ENCODE measurements at regions of chr2 and their contacts with region 1.

Region 1: DNA sequence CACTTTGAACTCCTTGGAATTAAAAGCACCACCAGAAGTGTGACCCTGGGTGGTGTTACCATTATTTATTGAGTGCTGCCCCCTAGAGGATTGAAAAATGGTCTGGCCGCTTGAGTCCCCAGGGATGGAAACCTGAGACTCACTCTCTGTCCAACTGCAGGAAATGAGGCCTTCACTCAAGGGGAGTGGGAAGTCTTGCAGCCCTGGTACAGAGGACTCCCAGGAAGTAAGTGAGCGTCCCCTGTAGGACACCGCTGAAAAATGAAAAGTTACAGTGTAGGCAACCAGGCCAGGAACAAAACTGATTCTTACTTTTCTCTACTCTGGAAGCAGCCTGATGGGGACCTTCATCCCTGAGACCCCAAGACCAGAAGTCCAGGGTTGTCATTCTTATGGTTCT is 2.2 kb upstream of the NRP2 start:
- DNase-seq: no peak
- H3K4me3 ChIP-seq: no peak overlapping the region
- H3K27ac ChIP-seq: no peak overlapping the region
- H3K4me1 ChIP-seq: peaks cover 26% of the 10 kb centered on the region
- H3K27me3 ChIP-seq: no peaks in the 10 kb centered on the region
- CTCF ChIP-seq: peak; percentile 35 to 45 (median 42)
- POLR2A ChIP-seq: no peak

Region 2: GRCh38 chr2:204325468-204325867 is 1354.6 kb before region 1 on chr2:
- intact Hi-C with region 1: loop called (anchors 10 kb)
- DNase-seq: no peak
- H3K4me3 ChIP-seq: no peak overlapping the region
- H3K27ac ChIP-seq: no peak overlapping the region
- H3K4me1 ChIP-seq: peaks cover 6% of the 10 kb centered on the region
- H3K27me3 ChIP-seq: no peaks in the 10 kb centered on the region
- CTCF ChIP-seq: peak; percentile 63 to 92 (median 76)
- POLR2A ChIP-seq: no peak

Region 3: DNA sequence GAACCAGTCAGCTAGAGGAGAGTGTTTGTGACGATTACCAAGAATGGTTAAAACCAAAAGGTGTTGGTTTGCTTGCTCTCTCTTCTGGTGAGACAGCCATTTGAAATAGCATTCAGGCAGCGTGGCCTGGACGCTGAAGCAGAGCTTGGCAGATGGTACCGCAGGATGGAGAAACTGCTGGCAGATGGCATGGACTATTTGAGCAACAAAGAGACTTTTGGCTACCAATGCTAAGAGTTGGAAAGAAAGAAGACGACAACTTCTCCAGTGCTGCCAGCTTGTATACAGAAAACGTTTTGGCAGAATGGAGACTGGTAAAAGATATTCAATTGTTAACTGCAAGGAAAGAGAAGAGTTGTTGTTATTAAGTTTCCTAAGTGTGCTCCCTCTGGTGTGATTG is 819.8 kb before region 1 on chr2:
- intact Hi-C with region 1: loop called (anchors 10 kb)
- DNase-seq: no peak
- H3K4me3 ChIP-seq: no peak overlapping the region
- H3K27ac ChIP-seq: no peak overlapping the region
- H3K4me1 ChIP-seq: no peaks in the 10 kb centered on the region
- H3K27me3 ChIP-seq: no peaks in the 10 kb centered on the region
- CTCF ChIP-seq: no peak
- POLR2A ChIP-seq: no peak

Region 4: DNA sequence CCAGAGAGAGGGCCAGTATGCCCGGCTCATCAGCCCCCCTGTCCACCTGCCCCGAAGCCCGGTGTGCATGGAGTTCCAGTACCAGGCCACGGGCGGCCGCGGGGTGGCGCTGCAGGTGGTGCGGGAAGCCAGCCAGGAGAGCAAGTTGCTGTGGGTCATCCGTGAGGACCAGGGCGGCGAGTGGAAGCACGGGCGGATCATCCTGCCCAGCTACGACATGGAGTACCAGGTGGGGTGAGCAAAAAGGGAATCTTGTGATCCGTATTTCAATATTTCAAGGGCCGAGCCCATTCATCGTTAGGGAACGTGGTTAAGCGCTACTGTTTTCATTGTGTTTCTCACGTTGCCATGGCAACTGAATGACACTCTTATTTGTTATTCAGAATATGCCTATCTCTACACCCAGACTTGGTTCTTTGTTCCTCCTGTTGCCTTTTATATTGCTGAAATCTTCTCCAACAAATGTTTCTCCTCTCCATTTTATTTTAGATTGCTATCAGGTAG is 83.7 kb after region 1 on chr2:
- intact Hi-C with region 1: loop called (anchors 5 kb)
- DNase-seq: no peak
- H3K4me3 ChIP-seq: no peak overlapping the region
- H3K27ac ChIP-seq: peak overlapping the region; percentile 24
- H3K4me1 ChIP-seq: peaks cover 10% of the 10 kb centered on the region
- H3K27me3 ChIP-seq: no peaks in the 10 kb centered on the region
- CTCF ChIP-seq: peak in 2 of 3 experiments; percentile 25 to 42
- POLR2A ChIP-seq: no peak

Measured in vagina (tissue), 2 donors.